T-cell (primary cell): ENCODE measurements at regions of chrX and their contacts with region 1.

Region 1: GRCh38 chrX:120457766-120458180 is 11.3 kb downstream of the LAMP2 start:
- DNase-seq: peak in 1 of 35 experiments; percentile 22
- ATAC-seq: peak; percentile 54 to 83 (median 70)
- H3K4me3 ChIP-seq: no peak overlapping the region
- H3K4me3 Mint-ChIP-seq: peak overlapping the region in 1 of 3 donors; percentile 55
- H3K27ac ChIP-seq: peak overlapping the region; percentile 11
- H3K27ac Mint-ChIP-seq: peak overlapping the region; percentile 73 to 76
- H3K4me1 ChIP-seq: peaks cover 9 to 17% of the 10 kb centered on the region in 2 experiments
- H3K4me1 Mint-ChIP-seq: peaks cover 37 to 67% (median 45%) of the 10 kb centered on the region in 3 donors
- H3K27me3 ChIP-seq: no peaks in the 10 kb centered on the region
- H3K27me3 Mint-ChIP-seq: no peaks in the 10 kb centered on the region

Region 2: DNA sequence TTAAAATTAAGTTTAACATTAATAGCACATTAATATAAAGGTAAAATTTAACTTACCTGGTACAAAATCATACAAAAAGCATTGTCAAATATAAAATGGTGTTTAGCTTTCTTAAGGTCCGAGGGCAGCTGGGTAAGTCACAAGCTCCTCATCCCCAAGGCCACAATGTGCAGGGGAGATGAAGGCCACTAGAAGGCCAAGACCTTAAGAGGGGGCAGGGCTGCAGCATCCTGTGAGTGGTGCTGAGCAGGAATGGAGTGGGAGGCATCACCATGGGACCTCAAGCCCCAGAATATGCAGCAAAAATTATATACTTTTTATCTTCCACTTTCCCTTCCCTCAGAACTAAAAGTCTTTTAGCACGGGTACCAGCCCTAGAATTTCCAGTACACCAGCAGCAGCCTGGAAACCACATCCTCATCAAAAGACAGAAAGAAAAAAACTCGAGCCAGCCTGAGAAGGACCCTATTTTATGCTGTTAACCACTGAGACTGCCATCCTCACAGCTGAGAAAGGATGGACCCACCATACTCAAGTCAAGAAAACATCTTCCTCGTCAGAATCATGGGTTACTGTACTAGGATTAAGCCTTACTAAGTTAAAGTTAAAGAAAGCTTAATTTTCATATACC is 312.4 kb before region 1 on chrX:
- CTCF ChIA-PET with region 1: interaction called in 1 of 2 experiments, 10 read pairs
- POLR2A ChIA-PET with region 1: no interaction called
- DNase-seq: peak in 3 of 35 experiments; percentile 0 to 13 (median 1)
- ATAC-seq: peak in 3 of 4 experiments; percentile 9 to 34 (median 29)
- H3K4me3 ChIP-seq: no peak overlapping the region
- H3K4me3 Mint-ChIP-seq: no peak overlapping the region
- H3K27ac ChIP-seq: no peak overlapping the region
- H3K27ac Mint-ChIP-seq: peak overlapping the region in 1 of 2 donors; percentile 49
- H3K4me1 ChIP-seq: peaks cover 2 to 9% of the 10 kb centered on the region in 2 experiments
- H3K4me1 Mint-ChIP-seq: peaks cover 12 to 37% (median 32%) of the 10 kb centered on the region in 3 donors
- H3K27me3 ChIP-seq: no peaks in the 10 kb centered on the region
- H3K27me3 Mint-ChIP-seq: peaks cover 0 to 15% of the 10 kb centered on the region in 2 donors